Endothelial cell of umbilical vein (primary cell): ENCODE measurements at regions of chr1 and their contacts with region 1.

Region 1: GRCh38 chr1:54199765-54200518 is at the starts of genes CYB5RL and MRPL37:
- DNase-seq: peak; percentile 97
- H3K4me3 ChIP-seq: peak within 1 kb of the TSS; percentile 58 to 67 (median 58)
- H3K27ac ChIP-seq: peak within 1 kb of the TSS; percentile 55
- H3K4me1 ChIP-seq: peaks cover 19% of the 10 kb centered on the region
- H3K27me3 ChIP-seq: no peaks in the 10 kb centered on the region
- CTCF ChIP-seq: no peak
- POLR2A ChIP-seq: peak; percentile 83
- total RNA-seq, gene CYB5RL: 8.6 and 9.6 TPM in 2 replicates
- total RNA-seq, gene MRPL37: 109 TPM in 2 replicates

Region 2: GRCh38 chr1:54212872-54213271 is 12.9 kb after region 1 on chr1:
- CTCF ChIA-PET with region 1: interaction called, 6 read pairs
- POLR2A ChIA-PET with region 1: interaction called, 10 read pairs
- dilution Hi-C with region 1: no loop called
- intact Hi-C with region 1: no loop called
- DNase-seq: no peak
- H3K4me3 ChIP-seq: no peak overlapping the region
- H3K27ac ChIP-seq: no peak overlapping the region
- H3K4me1 ChIP-seq: peaks cover under 1% of the 10 kb centered on the region
- H3K27me3 ChIP-seq: no peaks in the 10 kb centered on the region
- CTCF ChIP-seq: no peak
- POLR2A ChIP-seq: no peak

Region 3: DNA sequence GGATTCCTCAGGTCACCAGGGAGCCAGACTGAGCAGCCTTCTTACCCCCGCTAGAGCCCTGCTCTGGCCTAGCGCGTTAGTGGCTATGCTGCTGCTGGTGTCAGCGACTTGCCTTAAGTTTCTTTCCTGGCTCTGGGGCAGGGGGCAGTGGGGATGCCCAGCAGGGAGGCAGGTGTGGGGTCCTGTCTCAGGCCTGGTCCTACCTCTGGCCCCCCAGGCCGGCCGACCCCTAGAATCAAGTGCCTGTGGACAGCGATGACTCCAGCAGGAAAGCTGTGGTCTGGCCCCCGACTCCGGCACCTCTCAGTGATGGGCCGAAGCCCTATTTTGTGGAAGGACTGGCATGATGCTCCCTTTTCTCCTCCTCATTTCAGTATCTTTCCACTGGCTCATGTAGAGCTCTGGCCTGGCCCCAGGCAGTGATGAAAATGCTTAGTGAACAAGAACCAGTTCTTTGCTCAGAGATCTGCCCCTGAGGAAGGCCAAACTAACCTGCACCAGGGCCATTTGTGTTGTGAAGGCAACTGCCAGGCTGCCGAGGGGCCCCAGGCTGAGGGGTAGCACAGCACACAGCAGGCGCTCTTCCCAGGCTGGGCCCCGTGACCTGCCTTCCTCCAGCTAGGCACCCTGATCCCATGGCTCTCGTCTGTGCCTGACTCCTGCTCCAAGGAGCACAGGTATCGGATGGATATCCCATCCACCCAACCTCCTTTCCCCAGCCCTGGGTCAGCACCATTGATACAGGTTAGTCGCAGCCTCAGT is 23.7 kb after region 1 on chr1:
- CTCF ChIA-PET with region 1: no interaction called
- POLR2A ChIA-PET with region 1: no interaction called
- dilution Hi-C with region 1: no loop called
- intact Hi-C with region 1: no loop called
- DNase-seq: no peak
- H3K4me3 ChIP-seq: no peak overlapping the region
- H3K27ac ChIP-seq: no peak overlapping the region
- H3K4me1 ChIP-seq: peaks cover 3% of the 10 kb centered on the region
- H3K27me3 ChIP-seq: no peaks in the 10 kb centered on the region
- CTCF ChIP-seq: no peak
- POLR2A ChIP-seq: no peak

Region 4: DNA sequence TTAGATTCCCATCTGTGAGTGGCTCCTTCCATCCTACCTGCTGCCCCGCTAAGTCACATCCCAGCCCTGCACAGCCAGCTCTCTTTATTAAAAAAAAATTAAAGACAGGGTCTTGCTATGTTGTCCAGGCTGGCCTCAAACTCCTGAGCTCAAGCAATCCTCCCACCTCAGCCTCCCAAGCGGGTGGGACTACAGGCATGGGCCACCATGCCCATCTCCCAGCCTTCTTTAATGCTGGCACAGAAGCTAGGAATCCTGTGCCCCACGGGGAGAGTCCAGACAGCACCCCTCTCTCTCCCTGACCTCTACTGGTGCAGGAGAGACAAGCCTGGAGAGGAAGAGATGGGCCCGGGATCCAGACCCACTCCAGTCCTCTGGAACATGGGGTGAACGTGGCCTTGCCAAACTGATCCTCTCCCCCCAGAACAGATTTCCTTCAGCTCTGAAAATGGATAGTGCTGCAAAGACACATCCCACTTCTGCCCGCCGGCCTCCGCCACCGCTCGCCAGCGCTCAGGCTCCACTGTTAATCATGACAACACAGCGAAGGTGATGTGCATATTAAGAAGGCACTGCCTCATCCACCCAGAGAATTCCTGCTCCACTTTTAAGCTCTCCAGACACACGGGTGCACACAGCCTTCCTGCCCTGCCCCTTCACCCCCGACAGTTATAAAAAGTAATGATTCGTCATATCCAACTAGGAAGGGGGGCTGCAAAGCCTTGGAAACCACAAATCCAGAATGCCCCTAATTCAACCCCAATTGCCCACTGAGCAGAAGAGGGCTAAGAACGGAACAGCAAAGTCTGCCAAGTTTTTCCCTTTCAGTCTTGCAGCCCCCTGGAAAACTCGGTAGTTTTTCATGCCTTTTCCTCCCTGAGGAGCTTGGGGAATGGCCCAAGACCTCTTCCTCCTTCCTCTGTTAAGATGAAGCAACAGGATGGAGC is 68.1 kb after region 1 on chr1:
- CTCF ChIA-PET with region 1: no interaction called
- POLR2A ChIA-PET with region 1: no interaction called
- dilution Hi-C with region 1: no loop called
- intact Hi-C with region 1: no loop called
- DNase-seq: no peak
- H3K4me3 ChIP-seq: no peak overlapping the region
- H3K27ac ChIP-seq: no peak overlapping the region
- H3K4me1 ChIP-seq: peaks cover under 1% of the 10 kb centered on the region
- H3K27me3 ChIP-seq: no peaks in the 10 kb centered on the region
- CTCF ChIP-seq: no peak
- POLR2A ChIP-seq: no peak

Region 5: GRCh38 chr1:54413295-54413694 is 213.4 kb after region 1 on chr1:
- CTCF ChIA-PET with region 1: no interaction called
- POLR2A ChIA-PET with region 1: no interaction called
- dilution Hi-C with region 1: no loop called
- intact Hi-C with region 1: no loop called
- DNase-seq: peak; percentile 72
- H3K4me3 ChIP-seq: no peak overlapping the region
- H3K27ac ChIP-seq: peak overlapping the region; percentile 58
- H3K4me1 ChIP-seq: peaks cover 19% of the 10 kb centered on the region
- H3K27me3 ChIP-seq: peaks cover 0 to 2% of the 10 kb centered on the region in 2 experiments
- CTCF ChIP-seq: no peak
- POLR2A ChIP-seq: peak; percentile 67